Activated B cell treated with CpG ODN at 0.5 μM for 24 hours (primary cell): ENCODE measurements at regions of chr6 and their contacts with region 1.

Region 1: DNA sequence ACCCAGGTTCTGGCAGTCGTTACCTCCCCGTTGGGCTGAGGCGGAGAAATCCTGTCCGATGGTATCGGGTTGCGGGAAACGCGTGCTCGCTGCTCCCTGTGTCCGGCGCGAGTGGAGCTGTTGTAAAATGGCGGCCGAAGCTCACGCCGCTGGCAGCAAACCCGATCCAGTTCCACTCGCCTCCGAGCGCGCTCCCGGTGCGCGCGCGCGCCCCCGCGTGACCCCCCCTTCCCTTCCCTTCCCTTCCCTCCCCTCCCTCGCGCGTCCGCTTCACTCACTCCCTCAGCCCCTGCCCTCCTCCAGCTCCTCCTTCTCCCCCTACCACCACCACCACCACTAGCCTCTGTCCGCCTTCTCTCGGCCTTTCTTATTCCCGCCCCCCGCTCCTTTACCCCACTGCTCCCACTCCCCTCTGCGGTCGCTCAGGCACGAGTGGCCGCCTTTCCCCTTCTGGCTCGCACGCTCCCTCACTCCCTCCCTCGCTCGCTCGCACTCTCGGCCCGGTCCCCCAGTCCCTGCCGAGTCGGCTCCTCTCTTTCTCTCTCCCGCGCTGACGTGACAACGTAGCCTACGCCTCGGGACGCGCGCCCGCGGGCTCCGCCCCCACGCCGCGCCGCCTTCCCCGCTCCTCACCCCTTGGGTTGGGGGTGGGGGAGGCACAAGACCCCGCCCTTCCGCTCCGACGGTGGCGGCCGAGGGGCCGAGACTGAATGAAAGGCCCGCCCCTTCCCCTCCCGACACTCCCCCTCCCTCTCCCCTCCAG is at the start of gene SYNCRIP:
- DNase-seq: peak; percentile 98
- ATAC-seq: peak; percentile 81
- H3K4me3 Mint-ChIP-seq: peak within 1 kb of the TSS; percentile 98
- H3K27ac Mint-ChIP-seq: peak within 1 kb of the TSS; percentile 99
- H3K4me1 Mint-ChIP-seq: peaks cover 46% of the 10 kb centered on the region
- H3K27me3 Mint-ChIP-seq: no peaks in the 10 kb centered on the region
- CTCF ChIP-seq: no peak
- total RNA-seq, gene SYNCRIP: 119 and 122 TPM in 2 replicates

Region 2: GRCh38 chr6:85593438-85594196 is 49.3 kb before region 1 on chr6 and contains the start of gene SNX14:
- CTCF ChIA-PET with region 1: interaction called, 5 read pairs
- POLR2A ChIA-PET with region 1: interaction called, 127 read pairs
- intact Hi-C with region 1: loop called (anchors 1 kb)
- DNase-seq: peak; percentile 82
- ATAC-seq: peak; percentile 87
- H3K4me3 Mint-ChIP-seq: peak within 1 kb of the TSS; percentile 99
- H3K27ac Mint-ChIP-seq: peak within 1 kb of the TSS; percentile 98
- H3K4me1 Mint-ChIP-seq: peaks cover 47% of the 10 kb centered on the region
- H3K27me3 Mint-ChIP-seq: no peaks in the 10 kb centered on the region
- CTCF ChIP-seq: no peak
- total RNA-seq, gene SNX14: 61.6 and 70.8 TPM in 2 replicates

Region 3: DNA sequence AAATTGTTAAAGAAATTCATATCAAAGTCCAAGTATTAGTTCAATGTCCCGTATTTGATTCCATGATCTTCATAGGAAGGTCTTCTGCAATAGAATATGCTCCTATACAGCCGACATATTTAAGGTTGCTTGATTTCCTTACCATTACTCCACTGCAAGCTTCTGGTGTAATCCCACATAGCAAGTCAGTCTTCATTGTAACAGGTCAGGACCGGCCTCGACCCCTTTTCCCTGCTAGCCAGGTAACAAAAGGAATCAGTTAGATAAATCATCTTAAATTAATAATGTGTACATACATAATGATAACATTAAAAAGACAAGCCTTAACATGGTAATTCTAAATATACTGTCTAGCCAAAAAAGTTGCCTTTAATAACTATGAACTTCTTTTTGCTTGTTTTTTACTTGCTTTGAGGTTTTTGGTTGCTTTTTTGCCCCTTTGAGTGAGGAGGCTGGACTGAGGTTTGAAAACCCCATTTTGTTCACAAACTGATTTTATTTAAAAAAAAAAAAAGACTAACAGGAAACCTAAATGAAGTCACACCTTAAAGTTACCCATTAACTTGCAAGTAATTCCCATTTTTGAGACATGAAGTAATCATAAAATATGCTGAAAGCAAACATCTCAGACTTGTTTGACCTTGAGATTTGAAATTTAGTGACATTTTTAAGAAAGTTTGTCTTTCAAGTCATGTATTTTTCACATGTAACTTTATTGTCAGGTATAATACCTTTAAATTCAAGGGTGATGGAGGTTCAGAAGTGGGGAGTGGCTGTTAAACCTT is 30.1 kb before region 1 on chr6:
- CTCF ChIA-PET with region 1: no interaction called
- POLR2A ChIA-PET with region 1: interaction called, 3 read pairs
- intact Hi-C with region 1: loop called (anchors 2 kb)
- DNase-seq: no peak
- ATAC-seq: no peak
- H3K4me3 Mint-ChIP-seq: no peak overlapping the region
- H3K27ac Mint-ChIP-seq: no peak overlapping the region
- H3K4me1 Mint-ChIP-seq: no peaks in the 10 kb centered on the region
- H3K27me3 Mint-ChIP-seq: no peaks in the 10 kb centered on the region
- CTCF ChIP-seq: no peak

Region 4: DNA sequence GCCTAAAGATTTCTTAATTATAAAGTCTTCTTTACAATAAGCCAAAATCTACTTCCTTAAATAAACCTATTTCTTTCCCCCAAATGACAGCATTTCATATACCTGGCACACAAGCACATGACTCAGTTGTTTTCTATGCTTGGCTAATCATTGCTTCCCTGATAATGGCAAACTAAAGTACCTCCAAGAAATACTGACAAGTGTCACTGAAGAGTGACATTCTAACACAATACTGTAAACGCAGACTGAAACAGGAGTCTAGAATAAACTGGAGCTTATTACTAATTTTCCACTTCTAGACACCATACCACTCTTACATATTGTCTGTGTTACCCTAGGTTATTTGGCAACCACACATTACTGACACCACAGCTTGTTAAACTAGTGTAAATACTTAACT is 14.6 kb before region 1 on chr6:
- CTCF ChIA-PET with region 1: no interaction called
- POLR2A ChIA-PET with region 1: interaction called, 12 read pairs
- intact Hi-C with region 1: loop called (anchors 1 kb)
- DNase-seq: no peak
- ATAC-seq: no peak
- H3K4me3 Mint-ChIP-seq: no peak overlapping the region
- H3K27ac Mint-ChIP-seq: no peak overlapping the region
- H3K4me1 Mint-ChIP-seq: peaks cover 31% of the 10 kb centered on the region
- H3K27me3 Mint-ChIP-seq: no peaks in the 10 kb centered on the region
- CTCF ChIP-seq: no peak

Region 5: DNA sequence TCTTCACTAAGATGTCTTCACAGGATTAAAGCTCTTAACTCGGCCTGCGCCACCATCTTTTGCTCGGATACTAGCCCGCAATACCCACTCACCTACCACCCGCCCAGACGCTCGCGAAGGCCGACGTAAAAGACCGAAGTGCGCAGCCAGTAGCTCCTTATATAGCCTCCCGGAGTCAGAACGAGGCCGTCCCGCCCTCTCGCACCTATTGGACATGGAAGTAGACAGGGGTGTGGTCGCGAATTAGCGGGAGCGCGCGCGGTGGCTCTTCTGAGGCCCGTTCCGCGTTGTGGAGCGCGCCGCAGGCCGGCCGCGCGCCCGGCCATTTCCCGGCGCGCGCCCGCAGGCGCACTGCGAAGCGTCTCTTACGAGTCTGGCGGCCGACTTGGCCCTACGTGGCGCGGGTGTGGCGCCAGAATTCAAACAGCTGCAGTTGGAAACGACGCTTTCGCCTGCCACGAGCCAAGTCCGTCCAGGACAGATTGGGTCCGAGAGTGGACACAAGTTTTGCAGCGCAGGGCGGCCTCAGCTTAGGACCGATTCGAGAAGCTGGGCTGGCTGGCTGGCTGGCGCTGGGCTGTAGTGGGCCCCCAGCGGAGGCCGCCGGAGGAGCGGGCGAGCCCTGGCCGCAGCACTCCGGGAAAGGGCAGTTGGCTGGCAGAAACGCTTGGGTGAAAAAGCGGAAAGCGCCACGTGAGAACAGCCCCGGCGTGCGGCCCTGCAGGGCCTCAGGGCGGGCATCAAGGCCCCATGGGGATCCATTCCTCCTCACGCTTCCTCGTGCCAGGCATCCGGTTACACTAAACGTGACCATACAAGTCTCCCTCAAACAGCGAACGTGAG is 35.9 kb after region 1 on chr6:
- CTCF ChIA-PET with region 1: interaction called, 32 read pairs
- POLR2A ChIA-PET with region 1: interaction called, 845 read pairs
- intact Hi-C with region 1: loop called (anchors 1 kb)
- DNase-seq: peak; percentile 96
- ATAC-seq: peak; percentile 87
- H3K4me3 Mint-ChIP-seq: peak overlapping the region; percentile 99
- H3K27ac Mint-ChIP-seq: peak overlapping the region; percentile 98
- H3K4me1 Mint-ChIP-seq: peaks cover 48% of the 10 kb centered on the region
- H3K27me3 Mint-ChIP-seq: no peaks in the 10 kb centered on the region
- CTCF ChIP-seq: no peak

Region 6: GRCh38 chr6:85792254-85792653 is 149.3 kb after region 1 on chr6:
- CTCF ChIA-PET with region 1: no interaction called
- POLR2A ChIA-PET with region 1: no interaction called
- intact Hi-C with region 1: no loop called
- DNase-seq: no peak
- ATAC-seq: no peak
- H3K4me3 Mint-ChIP-seq: no peak overlapping the region
- H3K27ac Mint-ChIP-seq: no peak overlapping the region
- H3K4me1 Mint-ChIP-seq: no peaks in the 10 kb centered on the region
- H3K27me3 Mint-ChIP-seq: no peaks in the 10 kb centered on the region
- CTCF ChIP-seq: no peak